ENCODE measurements at regions of chr12 and their contacts with region 1.

Region 1: GRCh38 chr12:4052691-4053090 is 179.5 kb upstream of the PARP11 start:
- DNase-seq: no peak
- ATAC-seq: no peak

Region 2: GRCh38 chr12:4025417-4026358 is 27.0 kb before region 1 on chr12:
- intact Hi-C with region 1: loop called (anchors 2 kb)
- DNase-seq: peak; percentile 65
- ATAC-seq: peak; percentile 85

Measured in sciatic nerve (tissue), 2 donors.